IMR-90 (cell line): ENCODE measurements at regions of chr7 and their contacts with region 1.

Region 1: GRCh38 chr7:45923290-45923689 is 2.2 kb upstream of the IGFBP3 start:
- DNase-seq: peak; percentile 72
- ATAC-seq: no peak
- H3K4me3 ChIP-seq: no peak overlapping the region; the same call in 1 of the 2 replicates
- H3K27ac ChIP-seq: no peak overlapping the region
- H3K4me1 ChIP-seq: peaks cover 14% of the 10 kb centered on the region
- H3K27me3 ChIP-seq: no peaks in the 10 kb centered on the region
- CTCF ChIP-seq: peak; percentile 97
- POLR2A ChIP-seq: peak; percentile 47; the same call in 1 of the 2 replicates
- RAD21 ChIP-seq: peak; percentile 99

Region 2: GRCh38 chr7:45215601-45216062 is 707.7 kb before region 1 on chr7:
- CTCF ChIA-PET with region 1: no interaction called
- POLR2A ChIA-PET with region 1: no interaction called
- dilution Hi-C with region 1: no loop called
- in situ Hi-C with region 1: no loop called
- intact Hi-C with region 1: no loop called
- DNase-seq: no peak
- ATAC-seq: no peak
- H3K4me3 ChIP-seq: no peak overlapping the region
- H3K27ac ChIP-seq: no peak overlapping the region
- H3K4me1 ChIP-seq: no peaks in the 10 kb centered on the region
- H3K27me3 ChIP-seq: peaks cover 33% of the 10 kb centered on the region
- CTCF ChIP-seq: no peak
- POLR2A ChIP-seq: no peak
- RAD21 ChIP-seq: no peak

Region 3: GRCh38 chr7:45872116-45873034 is 50.9 kb before region 1 on chr7:
- CTCF ChIA-PET with region 1: no interaction called
- POLR2A ChIA-PET with region 1: no interaction called
- dilution Hi-C with region 1: no loop called
- in situ Hi-C with region 1: no loop called
- intact Hi-C with region 1: no loop called
- DNase-seq: no peak
- ATAC-seq: 0 out of 2 replicates have a peak, but pooled peaks have one; percentile 22
- H3K4me3 ChIP-seq: no peak overlapping the region
- H3K27ac ChIP-seq: no peak overlapping the region
- H3K4me1 ChIP-seq: peaks cover 6% of the 10 kb centered on the region
- H3K27me3 ChIP-seq: no peaks in the 10 kb centered on the region
- CTCF ChIP-seq: peak; percentile 43
- POLR2A ChIP-seq: no peak
- RAD21 ChIP-seq: peak; percentile 17; the same call in 1 of the 2 replicates

Region 4: GRCh38 chr7:45978010-45978681 is 54.9 kb after region 1 on chr7:
- CTCF ChIA-PET with region 1: interaction called, 7 read pairs
- POLR2A ChIA-PET with region 1: interaction called, 10 read pairs
- dilution Hi-C with region 1: no loop called
- in situ Hi-C with region 1: no loop called
- intact Hi-C with region 1: no loop called
- DNase-seq: peak; percentile 99
- ATAC-seq: peak; percentile 80
- H3K4me3 ChIP-seq: no peak overlapping the region
- H3K27ac ChIP-seq: peak overlapping the region; percentile 96
- H3K4me1 ChIP-seq: peaks cover 36% of the 10 kb centered on the region
- H3K27me3 ChIP-seq: no peaks in the 10 kb centered on the region
- CTCF ChIP-seq: no peak; the same call in 1 of the 2 replicates
- POLR2A ChIP-seq: peak; percentile 57; the same call in 1 of the 2 replicates
- RAD21 ChIP-seq: peak; percentile 31

Region 5: GRCh38 chr7:46191776-46192175 is 268.5 kb after region 1 on chr7:
- CTCF ChIA-PET with region 1: interaction called, 3 read pairs
- POLR2A ChIA-PET with region 1: no interaction called
- dilution Hi-C with region 1: no loop called
- in situ Hi-C with region 1: no loop called
- intact Hi-C with region 1: loop called (anchors 5 kb)
- DNase-seq: peak; percentile 91
- ATAC-seq: peak; percentile 93
- H3K4me3 ChIP-seq: no peak overlapping the region
- H3K27ac ChIP-seq: peak overlapping the region; percentile 63; the same call in 1 of the 2 replicates
- H3K4me1 ChIP-seq: peaks cover 23% of the 10 kb centered on the region
- H3K27me3 ChIP-seq: no peaks in the 10 kb centered on the region
- CTCF ChIP-seq: no peak
- POLR2A ChIP-seq: no peak
- RAD21 ChIP-seq: no peak

Region 6: GRCh38 chr7:46454816-46455215 is 531.5 kb after region 1 on chr7:
- CTCF ChIA-PET with region 1: interaction called, 3 read pairs
- POLR2A ChIA-PET with region 1: no interaction called
- dilution Hi-C with region 1: no loop called
- in situ Hi-C with region 1: no loop called
- intact Hi-C with region 1: loop called (anchors 10 kb)
- DNase-seq: peak; percentile 7
- ATAC-seq: no peak
- H3K4me3 ChIP-seq: no peak overlapping the region
- H3K27ac ChIP-seq: no peak overlapping the region
- H3K4me1 ChIP-seq: peaks cover 8% of the 10 kb centered on the region; the same call in 1 of the 2 replicates
- H3K27me3 ChIP-seq: no peaks in the 10 kb centered on the region
- CTCF ChIP-seq: no peak
- POLR2A ChIP-seq: no peak
- RAD21 ChIP-seq: no peak

Region 7: DNA sequence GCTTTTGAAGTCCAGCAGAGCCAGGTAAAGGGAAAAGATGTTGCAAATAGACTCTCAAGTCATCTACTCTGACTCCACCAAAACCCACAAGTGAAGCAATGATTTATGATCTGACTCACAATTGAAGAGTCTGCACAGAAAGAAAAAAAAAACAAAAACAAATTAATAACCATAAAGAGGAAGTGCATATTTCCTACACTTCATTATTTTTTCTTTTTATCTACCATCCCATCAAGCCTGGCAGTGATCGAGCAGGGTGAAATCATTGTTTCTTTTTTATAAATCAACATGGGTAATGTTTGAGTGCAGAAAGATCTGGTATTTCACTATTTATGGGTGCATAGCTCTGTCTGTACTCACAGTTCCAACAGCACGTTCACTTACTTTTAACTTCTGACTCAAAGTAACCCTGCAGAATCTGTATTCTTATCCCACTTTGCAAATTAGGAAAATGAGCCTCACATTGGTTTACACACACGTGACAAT is 829.6 kb after region 1 on chr7:
- CTCF ChIA-PET with region 1: no interaction called
- POLR2A ChIA-PET with region 1: no interaction called
- dilution Hi-C with region 1: no loop called
- in situ Hi-C with region 1: no loop called
- intact Hi-C with region 1: loop called (anchors 5 kb)
- DNase-seq: peak; percentile 77
- ATAC-seq: peak; percentile 74
- H3K4me3 ChIP-seq: no peak overlapping the region
- H3K27ac ChIP-seq: no peak overlapping the region
- H3K4me1 ChIP-seq: peaks cover 12% of the 10 kb centered on the region
- H3K27me3 ChIP-seq: no peaks in the 10 kb centered on the region
- CTCF ChIP-seq: no peak
- POLR2A ChIP-seq: no peak
- RAD21 ChIP-seq: no peak

Region 8: DNA sequence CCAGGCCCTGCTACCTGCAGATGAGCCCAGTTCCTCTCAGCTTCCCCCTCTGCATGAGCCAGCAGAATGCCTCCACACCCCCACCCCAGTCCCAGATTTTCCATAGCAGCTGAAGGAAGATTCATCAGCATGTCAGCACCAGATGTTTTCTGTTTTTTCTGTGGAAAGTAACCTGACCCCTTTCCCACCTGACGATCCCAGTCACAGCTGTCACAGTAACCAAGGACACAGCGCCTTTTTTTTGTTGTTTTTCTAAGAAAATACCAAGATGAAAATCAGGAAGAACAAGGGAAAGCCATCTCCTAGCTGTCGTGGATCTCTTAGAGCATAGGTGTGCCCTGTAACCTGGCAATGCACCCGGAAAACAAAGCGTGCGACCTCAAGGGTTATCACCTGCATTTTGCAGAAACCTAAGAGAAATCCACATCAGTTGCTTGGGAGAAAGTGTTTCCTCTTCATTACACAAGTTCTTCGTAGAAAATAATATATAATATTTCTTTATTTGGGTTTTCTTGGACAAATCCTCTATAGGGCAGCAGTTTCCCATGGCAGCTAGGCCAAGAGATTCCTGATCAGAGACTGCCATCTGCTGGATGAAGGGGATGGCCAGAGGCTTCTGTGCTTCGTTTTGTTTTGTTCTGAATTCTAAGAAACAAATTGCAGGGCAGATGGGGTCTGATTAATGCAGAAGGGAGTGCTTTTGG is 1256.7 kb after region 1 on chr7:
- CTCF ChIA-PET with region 1: interaction called, 4 read pairs
- POLR2A ChIA-PET with region 1: no interaction called
- dilution Hi-C with region 1: no loop called
- in situ Hi-C with region 1: loop called (anchors 5 kb)
- intact Hi-C with region 1: loop called (anchors 1 kb)
- DNase-seq: peak; percentile 72
- ATAC-seq: peak; percentile 97
- H3K4me3 ChIP-seq: no peak overlapping the region
- H3K27ac ChIP-seq: no peak overlapping the region
- H3K4me1 ChIP-seq: peaks cover 7% of the 10 kb centered on the region; the same call in 1 of the 2 replicates
- H3K27me3 ChIP-seq: peaks cover 27% of the 10 kb centered on the region
- CTCF ChIP-seq: peak; percentile 96
- POLR2A ChIP-seq: no peak
- RAD21 ChIP-seq: peak; percentile 97